ENCODE measurements at regions of chr12 and their contacts with region 1.

Region 1: DNA sequence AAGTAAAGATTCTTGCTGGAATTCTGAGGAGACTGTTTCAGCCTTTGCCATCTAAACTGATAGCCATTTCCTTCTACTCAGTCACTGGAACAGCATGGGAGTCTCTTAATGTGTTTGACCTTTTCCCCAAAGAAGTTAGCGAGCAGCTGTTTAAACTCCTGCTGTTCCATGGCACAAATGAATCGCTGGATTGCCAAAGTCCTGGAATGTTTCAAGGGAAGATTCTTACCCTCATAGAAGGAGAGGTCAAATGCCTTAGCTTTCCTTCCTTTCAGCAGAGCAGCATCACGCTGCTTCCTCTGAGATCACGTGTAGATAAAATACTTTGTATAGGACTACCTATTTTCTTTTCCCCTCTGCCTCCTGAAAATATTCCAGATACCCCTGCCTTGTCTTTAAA is 10.5 kb upstream of the NR2C1 start:
- DNase-seq: no peak
- ATAC-seq: no peak
- H3K4me3 Mint-ChIP-seq: no peak overlapping the region
- H3K27ac Mint-ChIP-seq: no peak overlapping the region
- H3K4me1 Mint-ChIP-seq: no peaks in the 10 kb centered on the region
- H3K27me3 Mint-ChIP-seq: no peaks in the 10 kb centered on the region
- CTCF ChIP-seq: no peak

Region 2: GRCh38 chr12:95072900-95073697 is 10.8 kb before region 1 on chr12 and contains the start of gene NR2C1:
- CTCF ChIA-PET with region 1: interaction called, 10 read pairs
- POLR2A ChIA-PET with region 1: interaction called, 4 read pairs
- intact Hi-C with region 1: no loop called
- DNase-seq: peak; percentile 43
- ATAC-seq: peak; percentile 99
- H3K4me3 Mint-ChIP-seq: peak within 1 kb of the TSS; percentile 90
- H3K27ac Mint-ChIP-seq: peak within 1 kb of the TSS; percentile 92
- H3K4me1 Mint-ChIP-seq: peaks cover 17% of the 10 kb centered on the region
- H3K27me3 Mint-ChIP-seq: no peaks in the 10 kb centered on the region
- CTCF ChIP-seq: no peak
- total RNA-seq, gene NR2C1: 24.9 to 32.4 TPM